HepG2 (cell line): ENCODE measurements at regions of chr16 and their contacts with region 1.

Region 1: GRCh38 chr16:85316321-85316919 is 204.1 kb upstream of the CIBAR2 start:
- DNase-seq: peak; percentile 80
- ATAC-seq: peak; percentile 85
- H3K4me3 ChIP-seq: no peak overlapping the region
- H3K27ac ChIP-seq: no peak overlapping the region
- H3K4me1 ChIP-seq: peaks cover 34% of the 10 kb centered on the region
- H3K27me3 ChIP-seq: peaks cover 16 to 20% of the 10 kb centered on the region in 2 experiments; a peak in 3 of 5 replicates
- CTCF ChIP-seq: peak; percentile 99
- EP300 ChIP-seq: no peak; a peak in 1 of 4 replicates
- POLR2A ChIP-seq: no peak
- RAD21 ChIP-seq: peak; percentile 92

Region 2: GRCh38 chr16:85275533-85276249 is 40.7 kb before region 1 on chr16:
- CTCF ChIA-PET with region 1: interaction called, 10 read pairs
- POLR2A ChIA-PET with region 1: no interaction called
- in situ Hi-C with region 1: no loop called
- intact Hi-C with region 1: no loop called
- DNase-seq: peak; percentile 60
- ATAC-seq: peak; percentile 88
- H3K4me3 ChIP-seq: no peak overlapping the region
- H3K27ac ChIP-seq: no peak overlapping the region
- H3K4me1 ChIP-seq: peaks cover 6% of the 10 kb centered on the region; the same call in 1 of the 2 replicates
- H3K27me3 ChIP-seq: peaks cover 3 to 4% of the 10 kb centered on the region in 2 experiments; a peak in 2 of 5 replicates
- CTCF ChIP-seq: peak; percentile 100
- EP300 ChIP-seq: no peak
- POLR2A ChIP-seq: no peak
- RAD21 ChIP-seq: peak; percentile 99

Region 3: DNA sequence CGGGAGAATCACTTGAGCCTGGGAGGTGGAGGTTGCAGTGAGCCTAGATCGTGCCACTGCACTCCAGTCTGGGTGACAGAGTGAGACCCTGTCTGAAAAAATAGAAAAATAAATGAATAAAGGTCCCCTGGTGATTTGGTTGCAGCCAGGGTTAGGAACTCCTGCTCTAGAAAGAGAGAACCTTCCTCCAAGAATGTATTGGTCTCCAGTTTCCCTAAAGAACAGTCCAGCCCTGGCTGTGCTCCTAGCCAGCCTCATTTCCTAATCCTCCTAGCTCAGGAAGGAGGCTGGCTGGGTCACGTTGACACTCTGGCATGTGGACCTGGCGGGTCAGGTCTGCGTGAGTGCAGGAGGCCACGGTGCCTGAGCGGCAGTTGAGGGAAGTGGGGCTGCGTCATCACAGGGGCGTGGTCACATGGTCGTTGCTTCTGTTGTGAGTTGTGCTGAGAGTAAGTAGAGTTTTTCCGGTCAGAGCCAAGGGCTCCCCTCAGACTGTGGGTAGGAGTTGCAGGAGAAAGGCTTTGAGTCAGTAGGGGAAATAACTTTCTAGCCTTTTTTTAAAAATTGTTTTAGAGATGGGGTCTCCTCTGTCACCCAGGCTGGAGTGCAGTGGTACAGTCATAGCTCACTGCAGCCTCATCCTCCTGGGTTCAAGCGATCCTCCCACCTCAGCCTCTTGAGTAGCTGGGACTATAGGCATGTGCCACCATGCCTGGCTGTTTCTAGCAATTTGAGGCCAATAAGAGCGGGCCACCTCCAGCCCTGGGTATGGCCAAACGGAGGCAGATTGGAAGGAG is 10.2 kb before region 1 on chr16:
- CTCF ChIA-PET with region 1: interaction called, 12 read pairs
- POLR2A ChIA-PET with region 1: interaction called, 8 read pairs
- in situ Hi-C with region 1: no loop called
- intact Hi-C with region 1: no loop called
- DNase-seq: peak; percentile 84
- ATAC-seq: peak; percentile 56
- H3K4me3 ChIP-seq: peak overlapping the region in 1 of 3 experiments; percentile 42; a peak in 1 of 6 replicates
- H3K27ac ChIP-seq: peak overlapping the region; percentile 72
- H3K4me1 ChIP-seq: peaks cover 75% of the 10 kb centered on the region
- H3K27me3 ChIP-seq: peaks cover 1 to 6% of the 10 kb centered on the region in 2 experiments; a peak in 1 of 5 replicates
- CTCF ChIP-seq: peak; percentile 38
- EP300 ChIP-seq: peak in 1 of 2 experiments; percentile 62; a peak in 1 of 4 replicates
- POLR2A ChIP-seq: peak in 1 of 2 experiments; percentile 25; a peak in 2 of 4 replicates
- RAD21 ChIP-seq: no peak

Region 4: DNA sequence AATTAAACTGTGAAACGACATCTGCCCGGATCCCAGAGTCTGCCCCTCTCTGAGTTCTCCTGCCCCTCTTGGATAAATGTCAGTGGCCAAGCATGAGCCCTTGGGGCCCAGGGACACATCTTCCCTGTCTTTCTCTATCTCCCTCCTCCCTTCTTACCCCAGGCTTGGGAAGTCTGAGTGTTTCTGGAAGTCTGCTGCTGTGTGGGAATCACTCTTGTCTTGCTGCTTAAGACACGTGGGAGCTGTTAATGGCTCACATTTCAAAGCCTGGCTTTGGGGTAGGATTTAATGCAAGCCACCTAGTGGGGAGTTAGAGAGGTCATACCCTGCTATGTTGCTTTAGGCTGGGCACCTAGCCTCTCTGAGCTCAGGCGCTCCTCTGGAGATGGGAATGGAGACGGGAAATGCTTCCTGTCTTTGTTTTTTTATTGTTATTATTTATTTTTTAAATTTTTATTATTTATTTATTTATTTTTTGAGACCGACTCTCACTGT is 14.3 kb after region 1 on chr16:
- CTCF ChIA-PET with region 1: no interaction called
- POLR2A ChIA-PET with region 1: no interaction called
- in situ Hi-C with region 1: no loop called
- intact Hi-C with region 1: loop called (anchors 2 kb)
- DNase-seq: peak; percentile 72
- ATAC-seq: peak; percentile 69
- H3K4me3 ChIP-seq: no peak overlapping the region
- H3K27ac ChIP-seq: no peak overlapping the region
- H3K4me1 ChIP-seq: peaks cover 45% of the 10 kb centered on the region
- H3K27me3 ChIP-seq: peaks cover 5 to 31% of the 10 kb centered on the region in 2 experiments
- CTCF ChIP-seq: peak; percentile 68
- EP300 ChIP-seq: no peak
- POLR2A ChIP-seq: no peak
- RAD21 ChIP-seq: peak; percentile 60